Ovary (tissue), 10 donors: ENCODE measurements at regions of chrX and their contacts with region 1.

Region 1: DNA sequence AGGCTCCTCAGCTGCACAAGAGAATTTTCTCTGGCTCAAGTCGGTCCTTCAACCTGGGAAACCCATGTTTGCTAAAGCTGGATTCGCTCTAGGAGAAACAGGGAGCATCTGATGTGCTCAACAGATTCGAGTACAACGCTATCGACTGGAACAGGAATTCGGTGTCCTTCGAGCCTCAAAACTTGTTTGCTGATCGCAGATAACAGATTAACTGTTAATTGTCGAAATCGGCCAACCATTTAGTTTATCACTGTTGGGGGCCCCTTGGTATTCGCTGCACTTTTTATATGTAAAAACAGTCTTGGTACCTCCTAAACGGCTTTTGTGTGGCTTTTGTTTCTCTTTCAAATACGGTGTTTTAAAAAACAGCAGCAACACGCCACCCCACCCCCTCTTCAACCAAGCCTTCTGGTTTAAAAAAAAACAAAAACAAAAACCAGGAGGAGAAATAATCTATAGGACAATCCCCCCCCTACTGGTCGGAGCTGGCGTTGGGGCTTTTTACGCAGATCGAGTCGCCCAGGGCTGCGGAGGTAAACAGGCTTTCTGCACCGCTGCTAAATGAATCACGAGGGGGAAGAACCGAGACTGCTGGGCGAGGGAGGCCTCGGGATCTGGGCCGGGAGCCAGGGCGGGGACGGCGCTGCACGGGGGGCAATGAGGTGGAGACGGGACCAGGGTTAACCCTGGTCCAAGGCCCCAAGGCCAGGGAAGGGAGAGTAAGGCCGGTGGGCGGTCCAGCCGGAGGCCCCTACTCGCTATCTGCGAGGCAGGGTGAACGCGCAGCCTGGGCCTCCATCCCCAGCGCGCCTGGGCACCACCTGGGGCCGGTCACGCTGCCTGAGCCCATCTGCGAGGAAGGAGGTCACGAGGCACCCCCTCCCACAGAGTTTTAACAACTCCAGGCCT is 71.7 kb upstream of the BCOR start:
- DNase-seq: peak; percentile 82 to 88 (median 85)
- H3K4me3 ChIP-seq: no peak overlapping the region
- H3K27ac ChIP-seq: peak overlapping the region; percentile 62 to 89
- H3K4me1 ChIP-seq: peaks cover 2% of the 10 kb centered on the region
- H3K27me3 ChIP-seq: no peaks in the 10 kb centered on the region
- CTCF ChIP-seq: peak in 2 of 3 donors; percentile 21 to 42
- EP300 ChIP-seq: no peak
- POLR2A ChIP-seq: no peak

Region 2: GRCh38 chrX:39814391-39814790 is 355.1 kb before region 1 on chrX:
- intact Hi-C with region 1: loop called in 2 of 4 experiments (anchors 5 to 10 kb)
- DNase-seq: no peak
- H3K4me3 ChIP-seq: no peak overlapping the region
- H3K27ac ChIP-seq: no peak overlapping the region
- H3K4me1 ChIP-seq: peaks cover 3% of the 10 kb centered on the region
- H3K27me3 ChIP-seq: no peaks in the 10 kb centered on the region
- CTCF ChIP-seq: peak in 1 of 3 donors; percentile 34
- EP300 ChIP-seq: no peak
- POLR2A ChIP-seq: no peak

Region 3: GRCh38 chrX:40097497-40098263 is 71.8 kb before region 1 on chrX and contains the start of gene BCOR:
- intact Hi-C with region 1: loop called in 3 of 4 experiments (anchors 5 kb)
- DNase-seq: peak; percentile 77 to 83 (median 77)
- H3K4me3 ChIP-seq: peak within 1 kb of the TSS; percentile 52
- H3K27ac ChIP-seq: peak within 1 kb of the TSS; percentile 78 to 86
- H3K4me1 ChIP-seq: peaks cover 2% of the 10 kb centered on the region
- H3K27me3 ChIP-seq: no peaks in the 10 kb centered on the region
- CTCF ChIP-seq: peak in 1 of 3 donors; percentile 9
- EP300 ChIP-seq: no peak
- POLR2A ChIP-seq: peak; percentile 79
- total RNA-seq, gene BCOR: 25.0 to 57.2 (median 43.2) TPM

Region 4: DNA sequence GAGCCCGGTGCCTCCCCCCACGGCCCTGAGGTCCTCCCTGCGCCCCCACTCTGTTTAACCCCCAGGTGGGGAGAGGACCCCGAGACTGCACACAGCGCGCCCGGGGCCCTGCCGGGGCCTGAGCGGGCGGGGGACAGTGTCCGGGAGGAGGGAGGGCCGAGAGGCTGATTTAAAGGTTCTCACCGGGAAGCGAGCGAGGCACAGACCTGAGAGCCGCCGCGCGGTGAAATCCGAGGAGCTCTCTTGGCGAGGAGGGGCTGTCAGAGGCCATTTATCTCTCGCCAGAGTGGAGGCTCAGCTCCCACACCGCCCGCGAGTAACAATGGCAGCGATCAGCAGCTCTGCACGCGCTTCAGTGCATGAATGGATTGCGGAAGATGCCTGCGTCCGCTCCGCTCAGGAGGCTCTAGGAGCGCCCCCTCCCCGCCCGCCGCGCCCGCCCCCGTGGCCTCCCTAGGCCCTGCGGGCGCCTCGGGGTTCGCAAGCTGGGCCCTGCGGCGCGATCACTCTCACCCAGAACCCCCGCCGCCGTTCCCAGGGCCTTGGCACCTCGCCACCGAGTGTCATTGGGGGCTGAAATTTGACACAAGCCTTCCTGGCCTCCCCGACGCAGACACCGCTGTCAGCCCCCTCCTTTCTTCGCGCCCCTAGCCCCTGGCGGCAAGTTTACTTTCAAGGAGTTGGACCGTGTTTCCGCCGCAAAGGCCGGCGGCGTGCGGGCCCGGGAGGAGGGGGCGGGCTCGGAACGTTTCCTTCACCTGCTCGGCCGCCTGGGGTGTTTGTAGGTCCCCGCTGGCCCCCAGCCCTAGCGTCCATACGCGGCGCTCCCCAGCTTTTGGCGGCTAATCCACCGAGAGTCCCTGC is 23.0 kb before region 1 on chrX:
- intact Hi-C with region 1: no loop called
- DNase-seq: peak; percentile 51 to 62 (median 54)
- H3K4me3 ChIP-seq: peak overlapping the region; percentile 39
- H3K27ac ChIP-seq: no peak overlapping the region
- H3K4me1 ChIP-seq: peaks cover 6% of the 10 kb centered on the region
- H3K27me3 ChIP-seq: no peaks in the 10 kb centered on the region
- CTCF ChIP-seq: no peak
- EP300 ChIP-seq: no peak
- POLR2A ChIP-seq: no peak

Region 5: GRCh38 chrX:40201329-40201885 is 32.0 kb after region 1 on chrX:
- intact Hi-C with region 1: no loop called
- DNase-seq: no peak
- H3K4me3 ChIP-seq: no peak overlapping the region
- H3K27ac ChIP-seq: no peak overlapping the region
- H3K4me1 ChIP-seq: no peaks in the 10 kb centered on the region
- H3K27me3 ChIP-seq: no peaks in the 10 kb centered on the region
- CTCF ChIP-seq: no peak
- EP300 ChIP-seq: no peak
- POLR2A ChIP-seq: no peak